Motor neuron (in vitro differentiated cells): ENCODE measurements at regions of chr12 and their contacts with region 1.

Region 1: DNA sequence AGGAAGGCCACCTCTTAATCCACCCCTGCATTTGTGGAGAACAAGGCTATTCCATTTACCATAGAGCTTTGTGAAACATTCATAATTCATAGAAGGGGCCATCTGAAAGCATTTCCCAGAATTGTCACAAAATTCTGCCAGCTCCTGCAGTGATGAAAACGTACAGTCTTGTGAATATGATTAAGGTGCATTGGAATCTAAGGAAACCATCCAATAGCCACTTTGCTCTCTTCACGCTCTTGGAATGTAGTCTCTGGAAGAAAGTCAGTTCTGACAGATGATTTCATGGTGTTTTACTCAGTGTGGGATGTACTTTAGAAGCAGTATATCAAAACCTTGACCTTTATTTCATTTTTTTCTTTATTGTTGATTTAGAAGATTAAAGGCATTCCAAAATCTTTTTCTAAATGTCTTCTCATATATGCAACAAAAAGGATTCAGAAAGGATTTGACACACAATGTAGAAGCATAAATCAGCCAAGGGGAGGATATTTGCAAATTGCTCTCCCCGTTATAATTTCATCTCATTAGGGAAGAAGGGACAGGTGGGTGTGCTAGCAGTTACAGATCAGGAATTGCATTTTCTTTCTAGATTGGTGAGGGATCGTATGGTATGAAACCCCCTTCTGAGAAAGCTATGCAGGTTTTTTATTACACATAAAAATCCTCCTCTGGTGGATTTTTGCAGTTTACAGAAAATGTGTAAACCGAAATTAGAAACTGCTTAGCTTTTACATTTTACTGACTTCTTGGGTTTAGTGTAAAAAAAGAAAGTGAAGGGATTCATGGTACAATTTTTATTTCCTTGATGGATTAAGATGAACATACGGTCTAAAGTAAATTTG is 390.2 kb downstream of the LRIG3 start:
- ATAC-seq: peak; percentile 55 to 88 (median 84)
- H3K4me3 ChIP-seq: no peak overlapping the region
- H3K27ac ChIP-seq: no peak overlapping the region
- H3K4me1 ChIP-seq: peaks cover 2 to 16% of the 10 kb centered on the region in 2 donors

Region 2: GRCh38 chr12:58359084-58359483 is 171.0 kb before region 1 on chr12:
- in situ Hi-C with region 1: loop called in 3 of 9 experiments (anchors 10 to 25 kb)
- ATAC-seq: peak in 2 of 8 experiments; percentile 25 to 34
- H3K4me3 ChIP-seq: no peak overlapping the region
- H3K27ac ChIP-seq: no peak overlapping the region
- H3K4me1 ChIP-seq: no peaks in the 10 kb centered on the region